ENCODE measurements at regions of chr2 and their contacts with region 1.

Region 1: DNA sequence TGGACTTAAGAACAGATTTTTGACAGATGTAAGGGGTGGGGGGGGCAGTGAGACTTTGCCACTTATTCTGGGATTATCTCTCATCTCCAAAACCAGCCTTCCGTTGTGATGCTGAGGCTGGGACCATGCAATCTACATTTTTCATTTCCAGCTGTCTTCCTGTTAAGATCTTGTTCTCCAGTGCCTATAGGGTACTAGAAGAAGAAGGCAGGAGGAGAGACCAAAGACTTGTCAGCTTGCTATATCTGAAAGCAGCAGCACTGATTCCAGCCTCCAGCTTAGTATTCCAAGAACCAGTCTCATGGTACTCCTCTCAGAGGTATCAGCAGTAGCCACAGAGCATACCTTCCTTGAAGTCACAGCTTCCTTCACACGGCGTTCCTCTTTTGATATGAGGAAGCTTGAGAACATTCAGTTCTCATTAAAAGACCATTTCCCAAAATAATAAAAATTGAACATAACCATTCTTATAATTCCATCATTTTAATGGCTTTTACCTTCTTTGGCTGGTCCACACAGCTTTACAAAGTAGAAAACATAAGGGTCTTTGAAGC is 49.8 kb downstream of the USP34 start:
- DNase-seq: no peak
- H3K4me3 Mint-ChIP-seq: no peak overlapping the region
- H3K27ac Mint-ChIP-seq: no peak overlapping the region
- H3K4me1 Mint-ChIP-seq: peaks cover 22% of the 10 kb centered on the region
- H3K27me3 Mint-ChIP-seq: no peaks in the 10 kb centered on the region
- CTCF ChIP-seq: no peak

Region 2: DNA sequence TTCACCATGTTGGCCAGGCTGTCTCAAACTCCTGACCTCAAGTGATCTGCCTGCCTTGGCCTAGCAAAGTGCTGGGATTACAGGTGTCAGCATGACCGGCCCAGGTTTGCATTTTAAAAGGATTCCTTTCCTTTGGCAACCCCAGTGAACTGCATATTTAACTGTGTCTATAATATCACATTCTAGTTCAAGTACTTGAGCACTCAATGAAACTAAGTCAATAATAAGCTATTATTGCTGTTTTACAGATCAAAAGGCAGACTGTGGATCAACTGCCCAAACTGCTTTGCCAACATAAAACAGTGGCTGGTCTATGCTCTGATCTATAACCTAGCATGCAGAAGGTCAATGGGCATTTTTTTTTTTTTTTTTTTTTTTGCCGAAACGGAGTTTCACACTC is 94.6 kb before region 1 on chr2:
- CTCF ChIA-PET with region 1: no interaction called
- POLR2A ChIA-PET with region 1: no interaction called
- intact Hi-C with region 1: no loop called
- DNase-seq: no peak
- H3K4me3 Mint-ChIP-seq: no peak overlapping the region
- H3K27ac Mint-ChIP-seq: no peak overlapping the region
- H3K4me1 Mint-ChIP-seq: no peaks in the 10 kb centered on the region
- H3K27me3 Mint-ChIP-seq: no peaks in the 10 kb centered on the region
- CTCF ChIP-seq: no peak

Region 3: GRCh38 chr2:61396005-61396404 is 25.1 kb before region 1 on chr2:
- CTCF ChIA-PET with region 1: interaction called, 4 read pairs
- POLR2A ChIA-PET with region 1: interaction called, 8 read pairs
- intact Hi-C with region 1: loop called (anchors 2 kb)
- DNase-seq: no peak
- H3K4me3 Mint-ChIP-seq: no peak overlapping the region
- H3K27ac Mint-ChIP-seq: no peak overlapping the region
- H3K4me1 Mint-ChIP-seq: no peaks in the 10 kb centered on the region
- H3K27me3 Mint-ChIP-seq: no peaks in the 10 kb centered on the region
- CTCF ChIP-seq: no peak

Measured in MCF 10A (cell line).